Activated naive CD4-positive, alpha-beta T cell treated with anti-CD3 and anti-CD28 coated beads for 36 hours (primary cell): ENCODE measurements at regions of chr10 and their contacts with region 1.

Region 1: GRCh38 chr10:93352638-93353383 is 129.3 kb downstream of the MYOF start:
- DNase-seq: no peak
- H3K4me3 Mint-ChIP-seq: no peak overlapping the region
- H3K27ac Mint-ChIP-seq: no peak overlapping the region
- H3K4me1 Mint-ChIP-seq: peaks cover 2% of the 10 kb centered on the region
- H3K27me3 Mint-ChIP-seq: peaks cover 14% of the 10 kb centered on the region

Region 2: GRCh38 chr10:92914478-92915325 is 438.1 kb before region 1 on chr10:
- CTCF ChIA-PET with region 1: no interaction called
- intact Hi-C with region 1: loop called (anchors 1 kb)
- DNase-seq: peak; percentile 68
- H3K4me3 Mint-ChIP-seq: no peak overlapping the region
- H3K27ac Mint-ChIP-seq: no peak overlapping the region
- H3K4me1 Mint-ChIP-seq: no peaks in the 10 kb centered on the region
- H3K27me3 Mint-ChIP-seq: no peaks in the 10 kb centered on the region

Region 3: DNA sequence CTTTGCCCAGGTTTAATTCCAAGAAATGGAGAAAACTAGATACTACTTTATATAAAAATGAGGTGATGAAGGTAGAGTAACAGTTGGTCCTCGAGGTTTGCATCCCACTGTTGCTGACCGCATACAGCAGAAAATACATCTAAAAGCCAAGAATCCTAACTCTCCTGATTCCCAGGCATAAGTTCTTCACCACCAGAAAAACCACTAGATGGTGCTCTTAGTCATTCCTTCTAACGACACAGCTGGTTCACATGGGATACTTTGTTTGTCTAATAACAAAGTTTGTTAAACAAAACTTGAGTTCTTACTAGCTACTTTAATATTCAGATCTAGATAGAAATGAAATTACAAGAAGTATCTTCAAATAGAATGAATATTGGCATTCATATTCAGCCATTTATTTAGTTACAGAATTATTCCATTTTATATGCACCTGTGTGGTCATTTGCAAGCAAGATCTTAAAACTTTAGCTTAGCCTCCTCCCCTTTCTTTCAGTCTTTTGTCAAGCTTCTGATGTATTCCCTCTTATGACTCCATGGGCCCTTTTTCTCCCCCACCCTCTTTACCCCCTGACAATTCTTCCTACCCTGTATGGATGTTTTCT is 346.3 kb before region 1 on chr10:
- CTCF ChIA-PET with region 1: interaction called, 7 read pairs
- intact Hi-C with region 1: loop called (anchors 1 kb)
- DNase-seq: no peak
- H3K4me3 Mint-ChIP-seq: no peak overlapping the region
- H3K27ac Mint-ChIP-seq: no peak overlapping the region
- H3K4me1 Mint-ChIP-seq: no peaks in the 10 kb centered on the region
- H3K27me3 Mint-ChIP-seq: no peaks in the 10 kb centered on the region

Region 4: GRCh38 chr10:93080350-93081046 is 272.3 kb before region 1 on chr10:
- CTCF ChIA-PET with region 1: interaction called, 12 read pairs
- intact Hi-C with region 1: loop called (anchors 1 kb)
- DNase-seq: peak; percentile 70
- H3K4me3 Mint-ChIP-seq: no peak overlapping the region
- H3K27ac Mint-ChIP-seq: no peak overlapping the region
- H3K4me1 Mint-ChIP-seq: peaks cover 6% of the 10 kb centered on the region
- H3K27me3 Mint-ChIP-seq: peaks cover 38% of the 10 kb centered on the region

Region 5: DNA sequence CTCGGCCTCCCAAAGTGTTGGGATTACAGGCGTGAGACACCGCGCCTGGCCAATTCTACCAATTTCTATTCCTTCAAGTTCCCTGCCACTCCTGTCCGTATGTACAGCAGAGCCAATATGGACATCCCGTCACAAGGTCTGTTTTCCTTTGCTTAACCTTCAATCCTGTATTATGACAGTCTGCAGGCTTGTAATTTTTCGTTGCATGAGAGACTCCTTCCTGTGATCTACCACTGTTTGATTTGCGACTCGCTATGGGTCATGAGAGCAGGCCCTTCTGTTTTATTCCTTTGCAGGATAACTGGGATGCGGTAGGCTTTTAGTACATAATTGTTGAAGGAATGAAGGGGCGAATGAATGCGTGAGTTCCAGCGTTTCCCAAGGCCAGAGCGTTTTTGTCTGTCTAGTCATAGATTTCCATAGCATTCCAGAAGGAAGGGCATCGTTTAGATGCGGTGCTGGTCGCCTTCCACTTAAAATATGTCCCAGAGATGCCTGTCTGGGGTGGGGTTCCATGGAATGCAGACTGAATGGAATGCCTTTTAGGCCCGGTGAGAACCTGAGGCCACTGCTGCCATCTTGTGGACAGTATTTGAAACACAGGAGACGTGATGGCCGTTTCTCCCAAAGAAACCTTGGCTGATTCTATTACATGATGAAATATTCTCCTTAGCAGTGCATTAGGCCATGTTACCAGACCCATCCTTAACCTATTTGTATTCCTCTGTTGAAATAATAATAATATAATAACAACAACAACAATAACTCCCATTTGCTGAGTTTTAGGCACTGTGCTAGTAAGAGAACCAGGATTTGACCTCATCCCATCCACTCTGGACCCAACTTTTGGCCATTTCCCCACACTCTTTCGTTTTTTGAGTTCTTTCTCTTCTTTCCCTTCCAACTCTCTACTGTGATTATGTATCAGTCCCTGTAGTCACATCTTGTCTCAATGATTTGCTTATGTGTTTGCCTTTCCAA is 63.9 kb before region 1 on chr10:
- CTCF ChIA-PET with region 1: interaction called, 3 read pairs
- intact Hi-C with region 1: loop called (anchors 2 kb)
- DNase-seq: peak; percentile 73
- H3K4me3 Mint-ChIP-seq: no peak overlapping the region
- H3K27ac Mint-ChIP-seq: peak overlapping the region; percentile 10
- H3K4me1 Mint-ChIP-seq: no peaks in the 10 kb centered on the region
- H3K27me3 Mint-ChIP-seq: no peaks in the 10 kb centered on the region